GM12878 (cell line): ENCODE measurements at regions of chr16 and their contacts with region 1.

Region 1: DNA sequence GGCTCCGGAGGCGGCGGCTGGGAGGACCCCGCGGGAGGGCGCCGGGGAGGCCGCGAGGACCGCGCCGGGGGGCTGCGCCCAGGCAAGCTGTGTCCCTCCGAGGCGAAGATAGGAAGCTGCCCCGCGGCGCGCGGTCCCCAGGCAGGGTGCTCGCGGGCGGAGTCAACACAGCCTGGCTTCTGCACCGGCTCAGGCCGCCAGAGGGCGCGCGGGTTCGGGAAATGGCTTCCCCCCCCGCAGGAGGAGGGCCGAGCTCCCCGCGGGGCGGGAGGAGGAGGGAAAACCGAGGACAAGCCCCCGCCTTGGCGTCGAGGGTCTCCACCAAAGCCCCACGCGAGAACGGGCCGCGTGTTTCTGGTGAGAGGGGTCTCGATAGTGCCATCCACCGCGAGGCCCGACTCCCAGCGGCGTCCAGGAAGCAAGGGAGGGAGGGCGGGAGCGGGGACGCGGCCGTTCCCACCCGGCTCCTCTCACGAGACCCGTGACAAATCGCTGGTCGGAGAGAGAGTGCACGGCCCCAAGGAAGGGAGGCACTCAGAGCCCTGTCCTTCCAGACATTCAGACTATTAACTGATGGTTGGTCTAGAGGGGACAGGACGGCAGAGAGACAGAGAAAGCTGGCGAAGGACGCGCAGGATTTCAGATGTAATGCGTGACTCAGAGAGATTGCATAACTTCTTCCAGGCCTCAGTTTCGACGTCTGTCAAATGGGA is 64.4 kb upstream of the DNAJA2 start:
- DNase-seq: peak; percentile 40
- ATAC-seq: peak; percentile 97
- H3K4me3 ChIP-seq: peak overlapping the region; percentile 75
- H3K27ac ChIP-seq: no peak overlapping the region
- H3K4me1 ChIP-seq: peaks cover 16% of the 10 kb centered on the region
- H3K27me3 ChIP-seq: no peaks in the 10 kb centered on the region
- CTCF ChIP-seq: peak; percentile 87 to 98 (median 95)
- EP300 ChIP-seq: 0 out of 4 replicates have a peak, but pooled peaks of 1 of the 2 experiments have one; percentile 21
- POLR2A ChIP-seq: peak; percentile 73
- RAD21 ChIP-seq: peak; percentile 90

Region 2: DNA sequence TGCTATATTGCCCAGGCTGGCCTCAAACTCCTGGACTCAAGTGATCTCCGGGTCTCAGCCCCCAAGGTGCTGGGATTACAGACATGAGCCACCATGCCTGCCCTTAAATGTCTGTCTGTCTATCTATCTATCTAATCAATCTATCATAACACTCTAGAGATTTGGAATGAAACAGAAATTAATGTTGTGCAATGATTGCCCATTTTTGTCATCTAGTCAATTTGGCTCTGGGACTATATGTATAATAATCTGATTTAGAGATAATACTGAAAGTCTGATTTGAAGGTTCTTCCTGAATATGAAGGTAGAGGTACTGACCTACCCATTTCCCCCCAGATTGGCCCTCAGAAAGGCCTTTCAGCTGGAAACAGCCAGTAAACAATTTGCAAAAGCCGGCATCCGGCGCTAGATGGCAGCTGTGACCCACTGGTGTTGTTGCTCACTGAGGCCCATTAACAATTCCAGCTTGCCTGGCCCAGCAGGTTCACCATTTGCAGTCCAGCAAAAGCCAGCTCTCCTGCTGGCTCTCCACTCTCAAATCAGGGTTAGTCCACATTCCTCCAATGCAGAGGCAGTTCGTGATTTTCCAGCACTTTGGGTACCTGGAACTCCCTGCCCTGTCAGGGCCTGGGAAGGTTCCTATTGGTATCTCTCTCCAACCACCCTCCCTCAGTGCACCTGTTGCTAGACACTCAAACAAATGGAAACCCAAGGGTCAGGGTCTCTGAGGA is 184.0 kb before region 1 on chr16:
- CTCF ChIA-PET with region 1: interaction called, 4 read pairs
- POLR2A ChIA-PET with region 1: no interaction called
- RAD21 ChIA-PET with region 1: interaction called, 3 read pairs
- SMC1A ChIA-PET with region 1: no interaction called
- in situ Hi-C with region 1: no loop called
- intact Hi-C with region 1: loop called (anchors 1 kb)
- DNase-seq: no peak
- ATAC-seq: peak; percentile 88
- H3K4me3 ChIP-seq: no peak overlapping the region
- H3K27ac ChIP-seq: no peak overlapping the region
- H3K4me1 ChIP-seq: peaks cover 4% of the 10 kb centered on the region; the same call in 1 of the 2 replicates
- H3K27me3 ChIP-seq: no peaks in the 10 kb centered on the region
- CTCF ChIP-seq: peak; percentile 87 to 96 (median 91)
- EP300 ChIP-seq: no peak
- POLR2A ChIP-seq: no peak
- RAD21 ChIP-seq: peak; percentile 98

Region 3: DNA sequence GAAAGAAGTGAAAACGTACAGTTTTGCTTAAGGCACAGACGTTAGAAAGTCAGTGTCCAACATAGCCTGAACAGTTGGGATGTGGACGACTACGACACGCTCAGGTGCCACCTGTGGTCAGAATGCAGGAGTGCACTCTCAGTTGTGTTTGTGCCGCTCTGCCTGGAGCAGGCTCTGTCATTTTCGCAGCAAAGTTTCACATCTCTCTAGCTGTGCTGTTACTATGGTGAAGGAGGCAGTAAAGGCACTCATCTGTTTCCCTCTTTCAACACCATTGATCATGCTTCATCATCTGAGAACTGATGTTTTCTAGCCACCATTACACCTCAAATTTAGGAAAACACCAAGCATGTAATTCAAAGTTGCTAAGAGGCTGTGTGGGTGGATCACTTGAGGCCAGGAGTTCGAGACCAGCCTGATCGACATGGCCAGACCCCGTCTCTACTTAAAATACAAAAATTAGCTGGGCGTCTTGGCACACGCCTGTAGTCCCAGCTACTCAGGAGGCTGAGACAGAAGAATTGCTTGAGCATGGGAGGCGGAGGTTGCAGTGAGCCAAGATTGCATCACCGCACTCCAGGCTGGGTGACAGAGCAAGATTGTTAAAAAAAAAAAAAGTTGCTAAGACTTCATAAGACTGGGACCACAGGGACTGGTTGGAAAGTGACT is 19.5 kb before region 1 on chr16:
- CTCF ChIA-PET with region 1: interaction called, 41 read pairs
- POLR2A ChIA-PET with region 1: no interaction called
- RAD21 ChIA-PET with region 1: interaction called, 12 read pairs
- SMC1A ChIA-PET with region 1: interaction called, 10 read pairs
- in situ Hi-C with region 1: no loop called
- intact Hi-C with region 1: no loop called
- DNase-seq: peak; percentile 98
- ATAC-seq: peak; percentile 97
- H3K4me3 ChIP-seq: no peak overlapping the region
- H3K27ac ChIP-seq: peak overlapping the region; percentile 38; the same call in 1 of the 2 replicates
- H3K4me1 ChIP-seq: peaks cover 31% of the 10 kb centered on the region
- H3K27me3 ChIP-seq: no peaks in the 10 kb centered on the region
- CTCF ChIP-seq: peak; percentile 72 to 86 (median 73)
- EP300 ChIP-seq: peak; percentile 54 to 55; a peak in 3 of 4 replicates
- POLR2A ChIP-seq: no peak
- RAD21 ChIP-seq: peak; percentile 80

Region 4: DNA sequence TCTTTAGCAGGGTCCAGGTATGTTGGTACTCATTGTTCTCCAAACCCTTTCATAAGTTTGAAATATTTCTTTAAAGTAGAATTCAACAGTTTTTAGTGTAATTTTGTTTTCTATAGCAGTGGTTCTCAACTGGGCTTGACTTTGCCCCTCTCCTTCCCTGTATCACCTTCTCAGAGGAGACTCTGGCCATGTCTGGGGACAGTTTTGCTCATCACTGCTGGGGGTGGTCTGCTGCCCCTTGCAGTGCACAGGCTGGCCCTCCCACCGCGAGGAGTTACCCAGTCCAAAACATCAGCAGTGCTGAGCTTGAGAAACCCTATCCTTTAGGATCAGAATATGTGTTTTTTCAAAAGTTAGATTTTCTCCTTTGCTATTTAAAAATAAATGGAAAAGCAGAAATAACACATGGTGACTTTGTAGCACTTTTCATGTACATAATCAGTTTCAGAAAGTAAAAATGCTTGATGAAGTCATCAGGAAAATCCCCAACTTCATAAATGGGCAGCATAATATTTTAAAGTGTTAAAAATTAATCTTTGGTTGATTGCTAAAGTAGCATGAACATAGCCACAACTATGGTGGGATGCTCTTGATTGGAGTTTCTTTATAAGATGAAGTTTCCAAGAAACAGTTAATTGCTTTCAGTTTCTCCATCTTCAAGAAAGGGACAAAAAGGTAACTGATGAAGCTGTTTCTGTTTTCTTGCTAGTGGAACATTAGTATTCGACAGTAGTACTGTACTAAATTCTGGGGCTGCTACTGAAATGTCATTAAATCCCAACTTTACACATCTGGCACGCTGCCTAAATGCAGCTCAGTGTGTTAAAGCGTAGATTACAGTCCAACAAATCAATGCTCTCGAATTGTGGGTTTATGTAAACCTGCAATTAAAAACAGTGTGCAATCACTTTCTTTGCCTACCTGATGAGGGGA is 35.6 kb after region 1 on chr16:
- CTCF ChIA-PET with region 1: interaction called, 16 read pairs
- POLR2A ChIA-PET with region 1: interaction called, 9 read pairs
- RAD21 ChIA-PET with region 1: interaction called, 24 read pairs
- SMC1A ChIA-PET with region 1: interaction called, 8 read pairs
- in situ Hi-C with region 1: no loop called
- intact Hi-C with region 1: no loop called
- DNase-seq: peak; percentile 43
- ATAC-seq: peak; percentile 82
- H3K4me3 ChIP-seq: no peak overlapping the region
- H3K27ac ChIP-seq: peak overlapping the region; percentile 48
- H3K4me1 ChIP-seq: peaks cover 12% of the 10 kb centered on the region
- H3K27me3 ChIP-seq: no peaks in the 10 kb centered on the region
- CTCF ChIP-seq: no peak
- EP300 ChIP-seq: 0 out of 4 replicates have a peak, but pooled peaks of 1 of the 2 experiments have one; percentile 27
- POLR2A ChIP-seq: no peak
- RAD21 ChIP-seq: no peak

Region 5: DNA sequence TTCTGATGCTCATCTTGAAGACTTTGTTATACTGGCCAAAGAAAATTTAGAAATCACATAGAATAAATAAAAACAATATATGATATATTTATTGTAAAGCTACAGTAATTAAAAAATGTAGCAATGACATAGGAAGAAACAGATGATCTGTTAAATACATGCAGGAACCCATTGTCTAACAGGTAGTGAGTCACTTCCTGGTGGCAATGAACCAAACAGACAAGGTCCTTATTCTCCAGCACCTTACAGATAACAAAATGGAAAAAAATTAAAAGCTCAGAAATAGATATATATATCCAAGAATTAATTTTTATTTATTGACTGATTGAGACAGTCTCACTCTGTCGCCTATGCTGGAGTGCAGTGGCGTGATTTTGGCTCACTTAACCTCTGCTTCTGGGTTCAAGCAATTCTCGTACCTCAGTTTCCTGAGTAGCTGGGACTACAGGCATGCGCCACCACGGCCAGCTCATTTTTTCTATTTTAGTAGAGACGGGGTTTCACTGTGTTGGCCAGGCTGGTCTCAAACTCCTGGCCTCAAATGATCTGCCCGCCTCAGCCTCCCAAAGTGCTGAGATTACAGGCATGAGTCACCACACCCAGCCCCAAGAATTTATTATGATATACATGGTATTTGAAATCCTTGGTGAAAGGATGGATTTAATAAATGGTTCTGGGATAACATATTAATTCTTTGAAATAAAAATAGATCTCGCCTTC is 98.4 kb after region 1 on chr16:
- CTCF ChIA-PET with region 1: interaction called, 162 read pairs
- POLR2A ChIA-PET with region 1: interaction called, 12 read pairs
- RAD21 ChIA-PET with region 1: interaction called, 127 read pairs
- SMC1A ChIA-PET with region 1: interaction called, 101 read pairs
- in situ Hi-C with region 1: loop called (anchors 5 kb)
- intact Hi-C with region 1: no loop called
- DNase-seq: no peak
- ATAC-seq: peak; percentile 51
- H3K4me3 ChIP-seq: no peak overlapping the region
- H3K27ac ChIP-seq: peak overlapping the region; percentile 32; the same call in 1 of the 2 replicates
- H3K4me1 ChIP-seq: peaks cover 10% of the 10 kb centered on the region
- H3K27me3 ChIP-seq: no peaks in the 10 kb centered on the region
- CTCF ChIP-seq: no peak
- EP300 ChIP-seq: no peak
- POLR2A ChIP-seq: no peak
- RAD21 ChIP-seq: no peak

Region 6: DNA sequence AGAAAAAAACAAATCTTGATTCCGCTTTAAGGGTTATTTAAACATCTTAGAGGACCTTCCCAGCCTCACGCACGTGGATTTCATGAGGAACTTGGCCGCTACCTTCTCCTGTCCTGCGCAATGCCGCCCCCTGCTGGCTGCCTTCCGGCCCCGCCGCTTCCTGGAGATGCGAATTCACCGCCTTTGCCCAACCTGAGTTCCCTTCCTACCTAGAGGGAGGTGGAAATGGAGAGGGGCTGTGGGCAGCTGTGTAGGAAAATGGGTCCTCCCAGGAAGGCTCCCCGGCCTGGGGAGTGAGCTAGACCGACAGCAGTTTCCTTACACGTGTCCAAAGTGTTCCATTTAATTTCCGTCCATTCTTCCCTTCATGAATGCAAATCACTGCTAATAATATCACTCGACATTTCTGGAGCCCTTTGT is 1118.9 kb after region 1 on chr16:
- CTCF ChIA-PET with region 1: interaction called, 4 read pairs
- POLR2A ChIA-PET with region 1: no interaction called
- RAD21 ChIA-PET with region 1: interaction called, 4 read pairs
- SMC1A ChIA-PET with region 1: interaction called, 4 read pairs
- in situ Hi-C with region 1: loop called (anchors 5 kb)
- intact Hi-C with region 1: loop called (anchors 5 kb)
- DNase-seq: no peak
- ATAC-seq: peak; percentile 81
- H3K4me3 ChIP-seq: no peak overlapping the region
- H3K27ac ChIP-seq: no peak overlapping the region
- H3K4me1 ChIP-seq: peaks cover 4% of the 10 kb centered on the region; the same call in 1 of the 2 replicates
- H3K27me3 ChIP-seq: no peaks in the 10 kb centered on the region; a peak in 1 of 4 replicates
- CTCF ChIP-seq: peak; percentile 90 to 96 (median 96)
- EP300 ChIP-seq: no peak
- POLR2A ChIP-seq: no peak
- RAD21 ChIP-seq: peak; percentile 83